CD4-positive, alpha-beta memory T cell (primary cell): ENCODE measurements at regions of chr6 and their contacts with region 1.

Region 1: GRCh38 chr6:112043032-112044007 is 10.6 kb upstream of the CCN6 start:
- DNase-seq: peak; percentile 88 to 95 (median 89)
- H3K4me3 ChIP-seq: peak overlapping the region; percentile 96 to 99
- H3K4me3 Mint-ChIP-seq: peak overlapping the region; percentile 90 to 99 (median 96)
- H3K27ac ChIP-seq: peak overlapping the region; percentile 96
- H3K27ac Mint-ChIP-seq: peak overlapping the region; percentile 96 to 100 (median 99)
- H3K4me1 ChIP-seq: peaks cover 9% of the 10 kb centered on the region
- H3K4me1 Mint-ChIP-seq: peaks cover 12 to 35% (median 20%) of the 10 kb centered on the region in 4 donors
- H3K27me3 ChIP-seq: no peaks in the 10 kb centered on the region
- H3K27me3 Mint-ChIP-seq: no peaks in the 10 kb centered on the region

Region 2: GRCh38 chr6:111057074-111057752 is 986.1 kb before region 1 on chr6:
- CTCF ChIA-PET with region 1: interaction called, 3 read pairs
- POLR2A ChIA-PET with region 1: interaction called, 3 read pairs
- intact Hi-C with region 1: loop called (anchors 1 kb)
- DNase-seq: peak in 4 of 5 donors; percentile 23 to 30 (median 27)
- H3K4me3 ChIP-seq: no peak overlapping the region
- H3K4me3 Mint-ChIP-seq: no peak overlapping the region
- H3K27ac ChIP-seq: no peak overlapping the region
- H3K27ac Mint-ChIP-seq: no peak overlapping the region
- H3K4me1 ChIP-seq: no peaks in the 10 kb centered on the region
- H3K4me1 Mint-ChIP-seq: peaks cover 0 to 5% (median 2%) of the 10 kb centered on the region in 4 donors
- H3K27me3 ChIP-seq: no peaks in the 10 kb centered on the region
- H3K27me3 Mint-ChIP-seq: no peaks in the 10 kb centered on the region

Region 3: DNA sequence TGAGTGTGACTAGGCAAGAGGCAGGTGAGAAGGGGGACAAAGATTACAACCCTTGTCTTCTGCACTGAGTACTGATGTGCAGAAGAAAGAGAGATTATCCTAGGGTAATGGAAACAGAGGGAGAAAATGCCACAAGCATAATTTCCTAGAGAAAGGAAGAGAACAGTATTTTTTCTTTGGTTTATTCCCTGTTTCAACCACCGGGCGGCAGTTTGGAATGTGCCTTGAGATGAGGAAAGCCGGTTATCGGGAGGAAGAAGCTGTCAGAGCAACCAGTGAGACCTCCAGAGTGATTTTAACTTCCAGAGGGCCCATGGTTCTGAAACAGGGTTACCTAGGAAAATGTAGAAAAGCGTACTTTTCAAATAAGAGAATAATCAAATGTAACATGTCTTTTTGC is 681.7 kb before region 1 on chr6:
- CTCF ChIA-PET with region 1: no interaction called
- POLR2A ChIA-PET with region 1: no interaction called
- intact Hi-C with region 1: loop called (anchors 5 kb)
- DNase-seq: peak in 2 of 5 donors; percentile 6
- H3K4me3 ChIP-seq: no peak overlapping the region
- H3K4me3 Mint-ChIP-seq: no peak overlapping the region
- H3K27ac ChIP-seq: no peak overlapping the region
- H3K27ac Mint-ChIP-seq: no peak overlapping the region
- H3K4me1 ChIP-seq: no peaks in the 10 kb centered on the region
- H3K4me1 Mint-ChIP-seq: no peaks in the 10 kb centered on the region
- H3K27me3 ChIP-seq: no peaks in the 10 kb centered on the region
- H3K27me3 Mint-ChIP-seq: no peaks in the 10 kb centered on the region

Region 4: DNA sequence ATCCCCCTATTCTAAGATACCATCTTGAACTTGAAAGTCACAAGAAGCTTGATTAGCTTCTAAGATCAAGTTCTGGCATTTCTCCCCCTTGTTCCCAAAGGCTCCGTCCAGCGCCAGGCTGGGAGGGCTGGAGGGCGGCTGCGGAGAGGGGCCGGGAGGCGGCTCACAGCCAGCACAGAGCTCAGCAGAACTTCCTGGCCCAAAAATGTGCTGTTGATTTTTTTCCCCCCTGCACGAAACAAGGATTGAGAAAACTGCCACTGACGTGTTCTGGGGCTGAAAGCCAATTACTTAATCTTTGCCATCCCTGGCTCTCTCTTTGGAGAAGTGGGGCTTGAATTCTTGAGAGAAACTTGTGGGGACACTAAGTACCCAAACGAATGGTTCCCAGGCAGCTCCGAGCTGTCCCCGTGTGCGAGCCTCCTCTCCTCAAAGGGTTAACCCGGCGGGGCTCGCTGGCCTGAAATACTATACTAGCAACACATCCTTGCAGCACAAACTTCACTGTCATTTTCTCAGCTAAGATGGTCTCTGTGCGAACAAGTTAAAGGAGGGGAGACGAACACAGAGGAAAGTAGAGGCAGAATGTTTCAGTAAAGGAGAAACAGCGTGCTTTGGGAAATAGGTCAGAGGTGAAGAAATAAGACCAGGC is 438.1 kb before region 1 on chr6:
- CTCF ChIA-PET with region 1: interaction called, 4 read pairs
- POLR2A ChIA-PET with region 1: no interaction called
- intact Hi-C with region 1: loop called (anchors 1 kb)
- DNase-seq: no peak
- H3K4me3 ChIP-seq: peak overlapping the region; percentile 59 to 79
- H3K4me3 Mint-ChIP-seq: peak overlapping the region; percentile 88 to 97 (median 92)
- H3K27ac ChIP-seq: peak overlapping the region; percentile 80
- H3K27ac Mint-ChIP-seq: peak overlapping the region; percentile 90 to 97 (median 95)
- H3K4me1 ChIP-seq: peaks cover 43% of the 10 kb centered on the region
- H3K4me1 Mint-ChIP-seq: peaks cover 27 to 61% (median 47%) of the 10 kb centered on the region in 4 donors
- H3K27me3 ChIP-seq: no peaks in the 10 kb centered on the region
- H3K27me3 Mint-ChIP-seq: no peaks in the 10 kb centered on the region

Region 5: DNA sequence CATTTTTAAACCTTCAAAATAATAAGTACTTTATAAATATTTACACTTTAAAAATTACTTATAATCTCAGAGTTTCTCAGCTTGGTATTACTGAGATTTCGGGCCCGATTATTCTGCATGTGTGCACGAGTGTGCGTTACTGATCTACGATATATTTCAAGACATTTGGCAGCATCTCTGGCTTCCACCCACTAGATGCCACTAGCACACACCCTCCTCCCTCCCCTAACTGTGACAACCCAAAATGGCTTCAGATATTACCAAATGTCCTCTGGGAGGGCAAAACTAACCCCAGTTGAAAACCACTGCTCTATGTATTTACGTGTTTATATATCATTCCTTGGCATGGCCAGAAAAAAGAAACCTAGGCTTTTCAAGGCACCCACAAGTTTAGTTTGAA is 266.0 kb before region 1 on chr6:
- CTCF ChIA-PET with region 1: interaction called, 13 read pairs
- POLR2A ChIA-PET with region 1: no interaction called
- intact Hi-C with region 1: no loop called
- DNase-seq: peak in 3 of 5 donors; percentile 46 to 50 (median 48)
- H3K4me3 ChIP-seq: no peak overlapping the region
- H3K4me3 Mint-ChIP-seq: peak overlapping the region; percentile 31 to 72 (median 62)
- H3K27ac ChIP-seq: peak overlapping the region; percentile 34
- H3K27ac Mint-ChIP-seq: peak overlapping the region in 6 of 7 donors; percentile 76 to 94 (median 90)
- H3K4me1 ChIP-seq: peaks cover 90% of the 10 kb centered on the region
- H3K4me1 Mint-ChIP-seq: peaks cover 67 to 93% (median 79%) of the 10 kb centered on the region in 4 donors
- H3K27me3 ChIP-seq: no peaks in the 10 kb centered on the region
- H3K27me3 Mint-ChIP-seq: no peaks in the 10 kb centered on the region

Region 6: GRCh38 chr6:111997078-111997852 is 46.1 kb before region 1 on chr6:
- CTCF ChIA-PET with region 1: interaction called, 12 read pairs
- POLR2A ChIA-PET with region 1: interaction called, 3 read pairs
- intact Hi-C with region 1: loop called (anchors 1 kb)
- DNase-seq: peak; percentile 76 to 79 (median 78)
- H3K4me3 ChIP-seq: peak overlapping the region in 1 of 2 donors; percentile 21
- H3K4me3 Mint-ChIP-seq: peak overlapping the region; percentile 64 to 85 (median 80)
- H3K27ac ChIP-seq: no peak overlapping the region
- H3K27ac Mint-ChIP-seq: peak overlapping the region; percentile 76 to 90 (median 85)
- H3K4me1 ChIP-seq: peaks cover 38% of the 10 kb centered on the region
- H3K4me1 Mint-ChIP-seq: peaks cover 39 to 47% (median 42%) of the 10 kb centered on the region in 4 donors
- H3K27me3 ChIP-seq: no peaks in the 10 kb centered on the region
- H3K27me3 Mint-ChIP-seq: no peaks in the 10 kb centered on the region

Region 7: GRCh38 chr6:112029045-112029822 is 14.1 kb before region 1 on chr6:
- CTCF ChIA-PET with region 1: interaction called, 619 read pairs
- POLR2A ChIA-PET with region 1: interaction called, 58 read pairs
- intact Hi-C with region 1: loop called (anchors 1 kb)
- DNase-seq: peak; percentile 36 to 62 (median 43)
- H3K4me3 ChIP-seq: no peak overlapping the region
- H3K4me3 Mint-ChIP-seq: peak overlapping the region in 7 of 8 donors; percentile 35 to 91 (median 74)
- H3K27ac ChIP-seq: peak overlapping the region; percentile 61
- H3K27ac Mint-ChIP-seq: peak overlapping the region; percentile 84 to 98 (median 94)
- H3K4me1 ChIP-seq: peaks cover 76% of the 10 kb centered on the region
- H3K4me1 Mint-ChIP-seq: peaks cover 55 to 79% (median 68%) of the 10 kb centered on the region in 4 donors
- H3K27me3 ChIP-seq: no peaks in the 10 kb centered on the region
- H3K27me3 Mint-ChIP-seq: no peaks in the 10 kb centered on the region